ENCODE measurements at regions of chr12 and their contacts with region 1.

Region 1: DNA sequence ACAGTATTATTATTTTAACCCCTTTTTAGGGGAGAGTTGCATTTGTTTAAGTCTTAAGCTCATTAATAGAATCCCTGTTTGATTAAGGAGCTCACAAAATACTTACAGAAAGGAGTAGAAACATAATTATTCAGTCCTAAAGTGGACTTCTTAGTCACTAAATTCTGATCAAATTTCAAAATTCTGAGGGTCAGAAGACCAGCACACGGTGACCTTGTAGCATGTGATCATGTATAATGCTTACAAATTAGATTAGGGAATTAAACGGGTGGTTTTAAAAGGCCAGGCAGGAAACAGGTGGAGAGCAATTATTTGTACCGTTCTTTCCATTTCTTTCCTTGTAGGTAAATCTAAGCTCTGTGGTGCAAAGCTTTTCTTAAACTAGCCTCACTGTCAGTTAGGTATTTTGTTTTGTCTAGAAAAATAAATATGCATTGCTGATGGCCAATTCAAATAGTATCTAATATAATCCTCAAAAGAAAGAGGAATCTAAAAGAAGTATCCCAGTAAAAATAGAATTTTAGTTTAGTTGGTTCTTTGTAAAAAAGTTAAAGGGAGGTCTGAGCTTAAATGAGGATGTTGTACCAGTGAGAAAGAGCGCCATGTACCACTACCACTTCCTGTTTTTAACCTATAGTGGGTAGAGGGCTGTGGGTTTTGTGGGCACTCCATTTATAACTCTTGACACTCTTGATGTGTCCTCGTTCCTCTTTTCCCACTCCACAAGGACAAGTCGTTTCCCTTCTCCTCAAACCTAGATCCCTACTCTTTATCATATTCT is 51.1 kb downstream of the SLC38A1 start:
- DNase-seq: peak; percentile 81
- H3K4me3 Mint-ChIP-seq: peak overlapping the region; percentile 73
- H3K27ac Mint-ChIP-seq: peak overlapping the region; percentile 95
- H3K4me1 Mint-ChIP-seq: peaks cover 94% of the 10 kb centered on the region
- H3K27me3 Mint-ChIP-seq: no peaks in the 10 kb centered on the region

Region 2: GRCh38 chr12:46110928-46111699 is 106.6 kb before region 1 on chr12:
- CTCF ChIA-PET with region 1: no interaction called
- POLR2A ChIA-PET with region 1: no interaction called
- DNase-seq: no peak
- H3K4me3 Mint-ChIP-seq: no peak overlapping the region
- H3K27ac Mint-ChIP-seq: no peak overlapping the region
- H3K4me1 Mint-ChIP-seq: no peaks in the 10 kb centered on the region
- H3K27me3 Mint-ChIP-seq: peaks cover 15% of the 10 kb centered on the region

Region 3: DNA sequence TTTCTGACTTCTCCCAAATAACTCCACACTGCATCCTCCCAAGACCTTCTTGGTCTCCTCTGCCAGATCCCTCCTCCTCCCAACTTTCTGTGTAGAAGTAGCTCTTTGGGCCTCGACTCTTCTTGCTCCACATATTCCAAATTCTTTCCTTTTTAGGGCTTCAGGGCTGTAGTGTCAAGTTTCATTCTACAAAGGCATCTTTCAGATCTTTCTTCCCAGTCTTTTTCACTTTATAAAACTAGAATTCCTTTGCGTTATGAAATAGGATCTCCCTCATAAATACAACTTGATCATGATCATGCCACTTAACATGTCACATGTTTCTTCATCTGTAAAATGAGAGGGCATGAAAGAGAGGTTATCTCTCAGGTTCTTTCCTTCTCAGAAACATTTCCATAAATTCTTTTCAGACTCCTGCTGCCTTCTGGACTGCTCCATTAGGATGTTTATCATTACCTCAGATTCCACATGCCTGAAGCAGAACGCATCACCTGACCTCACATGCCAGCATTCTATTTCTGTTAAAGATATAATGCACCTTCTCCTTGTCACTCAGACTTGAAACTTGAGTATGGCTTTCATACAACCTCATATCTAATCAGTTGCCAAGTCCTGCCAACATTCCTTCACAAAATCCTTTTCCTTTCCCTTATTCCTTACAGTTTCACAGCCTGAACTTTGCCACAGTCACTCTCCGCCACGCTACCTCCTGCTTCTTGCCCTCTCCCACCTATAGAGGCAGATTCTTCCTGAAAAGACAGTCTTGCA is 42.6 kb after region 1 on chr12:
- CTCF ChIA-PET with region 1: interaction called, 3 read pairs
- POLR2A ChIA-PET with region 1: interaction called, 221 read pairs
- DNase-seq: no peak
- H3K4me3 Mint-ChIP-seq: no peak overlapping the region
- H3K27ac Mint-ChIP-seq: no peak overlapping the region
- H3K4me1 Mint-ChIP-seq: peaks cover 40% of the 10 kb centered on the region
- H3K27me3 Mint-ChIP-seq: no peaks in the 10 kb centered on the region

Measured in activated CD4-positive, alpha-beta memory T cell treated with anti-CD3 and anti-CD28 coated beads, Interleukin-2, amount 10 ng/mL, durations not matched to agents 7 days and 5 days (primary cell).